Activated T-helper 1 cell treated with anti-CD3 and anti-CD28 coated beads, Interleukin-12 subunit alpha, Interleukin-12 subunit beta, Interleukin-2, Interleukin-4 antibody, amounts not matched to agents 30 ng/mL and 10 ng/mL and 1 ng/mL, durations not matched to agents 14 hours and 24 hours and 36 hours (primary cell): ENCODE measurements at regions of chr19 and their contacts with region 1.

Region 1: DNA sequence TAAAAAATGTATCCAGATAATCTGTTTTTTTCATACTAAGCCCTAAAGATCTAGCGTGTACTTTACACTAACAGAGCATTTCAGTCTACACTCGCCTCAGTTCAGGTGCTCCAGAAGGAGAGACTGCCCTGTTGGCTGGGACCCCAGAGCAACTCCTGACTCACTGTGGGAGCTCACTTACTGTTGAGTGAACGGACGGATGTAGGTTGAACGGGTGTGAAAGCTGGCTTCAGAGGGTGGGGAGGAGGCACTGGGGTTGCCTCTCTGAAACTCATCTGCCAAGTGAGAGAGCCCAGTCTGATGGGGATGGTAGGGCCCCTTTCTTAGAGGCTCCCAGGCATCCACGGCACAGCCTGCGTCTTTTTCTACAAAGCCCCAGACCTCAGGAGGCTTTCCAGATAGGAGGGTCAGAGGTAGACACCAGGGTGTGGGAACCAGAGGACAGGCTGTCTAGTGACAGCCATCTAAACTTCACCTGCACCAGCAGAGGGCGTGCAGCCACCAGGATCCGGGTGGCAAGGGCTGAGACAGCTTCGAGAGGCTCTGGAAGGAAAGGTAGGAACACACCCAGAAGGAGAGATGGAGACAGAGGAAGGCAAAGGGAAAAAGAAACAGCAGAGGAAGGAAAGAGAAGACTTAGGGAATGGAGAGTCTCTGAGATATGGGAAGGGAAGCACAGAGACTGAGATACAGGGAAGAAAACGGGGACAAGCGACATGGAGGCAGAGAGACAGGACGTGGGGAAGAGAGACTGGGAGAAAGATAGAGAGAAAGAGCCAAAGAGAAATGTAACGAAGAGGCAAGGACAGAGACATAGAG is 3.7 kb downstream of the KASH5 start:
- DNase-seq: peak; percentile 71
- H3K4me3 Mint-ChIP-seq: no peak overlapping the region
- H3K27ac Mint-ChIP-seq: peak overlapping the region; percentile 5
- H3K4me1 Mint-ChIP-seq: peaks cover 12% of the 10 kb centered on the region
- H3K27me3 Mint-ChIP-seq: peaks cover 3% of the 10 kb centered on the region

Region 2: DNA sequence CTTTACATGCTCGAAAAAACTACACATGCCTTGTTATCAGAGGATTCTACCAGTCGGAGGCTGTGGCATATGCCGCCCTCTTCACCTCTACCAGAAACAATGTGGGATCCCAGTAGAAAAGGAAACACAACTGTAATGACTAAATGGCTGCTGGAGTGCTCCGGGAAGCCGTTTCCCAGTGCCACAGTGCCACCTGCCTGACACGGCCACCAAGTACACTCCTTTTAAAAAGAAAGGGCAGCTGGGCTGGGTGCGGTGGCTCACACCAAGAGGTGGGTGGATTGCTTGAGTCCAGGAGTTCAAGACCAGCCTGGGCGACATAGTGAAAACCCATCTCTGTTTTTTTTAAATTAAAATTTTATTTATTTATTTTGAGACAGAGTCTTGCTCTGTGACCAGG is 166.9 kb before region 1 on chr19:
- intact Hi-C with region 1: no loop called
- DNase-seq: peak; percentile 14
- H3K4me3 Mint-ChIP-seq: no peak overlapping the region
- H3K27ac Mint-ChIP-seq: no peak overlapping the region
- H3K4me1 Mint-ChIP-seq: peaks cover 7% of the 10 kb centered on the region
- H3K27me3 Mint-ChIP-seq: peaks cover 10% of the 10 kb centered on the region

Region 3: DNA sequence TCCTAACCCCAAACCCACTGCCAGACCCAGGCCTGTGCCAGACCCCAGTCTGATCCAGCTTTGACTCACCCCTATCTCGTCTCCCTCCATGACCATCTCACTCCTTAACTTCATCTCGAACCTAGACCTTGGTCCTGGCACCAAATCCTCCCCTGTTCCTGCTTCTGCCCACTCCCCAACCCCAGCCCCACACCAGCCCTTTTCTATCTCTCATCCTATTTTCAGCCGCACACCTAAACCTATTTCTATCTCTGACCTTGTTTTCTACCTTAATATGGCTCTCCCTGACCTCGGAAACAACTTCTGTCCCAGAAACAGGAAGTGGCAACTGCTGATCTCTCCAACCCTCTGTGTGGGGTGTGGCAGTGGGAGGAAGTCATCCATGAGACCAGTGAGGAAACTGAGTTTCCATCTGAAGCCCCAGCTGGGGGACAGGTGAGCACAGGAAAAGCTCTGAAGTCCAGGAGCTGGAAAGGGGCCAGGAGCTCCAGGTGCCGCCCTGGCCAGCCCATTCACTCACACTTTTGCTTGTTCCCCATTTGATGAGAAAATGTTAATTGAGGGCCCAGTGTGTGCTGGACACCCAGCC is 17.7 kb after region 1 on chr19:
- intact Hi-C with region 1: loop called (anchors 1 kb)
- DNase-seq: peak; percentile 24
- H3K4me3 Mint-ChIP-seq: peak overlapping the region; percentile 6
- H3K27ac Mint-ChIP-seq: peak overlapping the region; percentile 81
- H3K4me1 Mint-ChIP-seq: peaks cover 44% of the 10 kb centered on the region
- H3K27me3 Mint-ChIP-seq: peaks cover 2% of the 10 kb centered on the region

Region 4: DNA sequence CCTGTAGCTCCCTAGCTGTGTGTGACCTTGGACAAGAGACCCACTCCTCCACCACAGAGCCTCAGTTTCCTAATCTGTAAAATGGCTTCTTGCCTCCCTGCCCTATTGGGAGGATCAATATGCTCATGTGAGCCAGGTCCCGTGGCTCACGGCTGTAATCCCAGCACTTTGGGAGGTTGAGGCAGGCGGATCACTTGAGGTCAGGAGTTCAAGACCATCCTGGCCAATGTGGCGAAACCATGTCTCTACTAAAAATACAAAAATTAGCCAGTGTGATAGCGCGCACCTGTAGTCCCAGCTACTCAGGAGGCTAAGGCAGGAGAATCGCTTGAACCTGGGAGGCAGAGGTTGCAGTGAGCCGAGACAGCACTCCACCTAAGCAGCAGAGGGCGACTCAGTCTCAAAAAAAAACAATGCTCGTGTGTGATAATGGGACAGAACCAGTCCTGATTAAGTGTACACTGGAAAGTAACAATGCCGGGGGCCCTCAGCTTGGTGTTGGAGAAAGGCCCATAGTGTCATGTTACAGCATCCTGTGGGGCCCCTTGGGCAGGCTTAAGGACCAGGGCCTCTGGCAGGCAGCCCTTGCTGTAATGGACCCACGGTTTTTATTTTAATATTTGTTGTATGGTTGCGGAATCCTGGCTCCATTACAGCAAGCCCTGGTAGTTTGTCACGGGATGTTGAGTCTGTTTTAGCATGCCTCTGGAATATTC is 111.2 kb after region 1 on chr19:
- intact Hi-C with region 1: no loop called
- DNase-seq: peak; percentile 56
- H3K4me3 Mint-ChIP-seq: no peak overlapping the region
- H3K27ac Mint-ChIP-seq: no peak overlapping the region
- H3K4me1 Mint-ChIP-seq: peaks cover 54% of the 10 kb centered on the region
- H3K27me3 Mint-ChIP-seq: no peaks in the 10 kb centered on the region